Activated CD4-positive, alpha-beta T cell treated with anti-CD3 and anti-CD28 coated beads for 36 hours (primary cell): ENCODE measurements at regions of chrX and their contacts with region 1.

Region 1: DNA sequence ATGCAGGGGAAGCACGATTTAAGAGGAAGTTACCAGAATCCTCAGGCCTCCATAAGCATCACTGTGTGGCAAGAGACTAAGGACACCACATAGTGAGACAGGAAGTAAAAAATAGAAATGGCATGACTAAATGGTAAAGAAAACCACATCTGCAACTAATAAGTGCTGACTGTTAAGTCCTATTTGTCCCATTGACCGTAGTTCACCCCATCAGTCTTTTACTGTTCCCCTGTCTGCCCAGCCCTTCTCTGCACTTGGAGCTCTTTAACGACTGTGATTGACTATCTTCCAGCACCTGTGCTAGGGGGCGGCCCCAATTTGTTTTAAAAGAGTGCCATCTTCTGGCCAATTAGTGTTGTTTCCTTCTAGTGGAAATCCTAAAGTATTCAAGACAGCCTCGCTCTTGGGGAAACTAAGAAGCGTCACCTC is 94.2 kb downstream of the MAOA start:
- DNase-seq: peak; percentile 51
- ATAC-seq: peak; percentile 68
- H3K4me3 Mint-ChIP-seq: no peak overlapping the region
- H3K27ac Mint-ChIP-seq: no peak overlapping the region
- H3K4me1 Mint-ChIP-seq: no peaks in the 10 kb centered on the region
- H3K27me3 Mint-ChIP-seq: no peaks in the 10 kb centered on the region

Region 2: GRCh38 chrX:41781502-41781901 is 1968.8 kb before region 1 on chrX:
- CTCF ChIA-PET with region 1: no interaction called
- POLR2A ChIA-PET with region 1: no interaction called
- intact Hi-C with region 1: loop called in 1 of 2 experiments (anchors 10 kb)
- DNase-seq: no peak
- ATAC-seq: no peak
- H3K4me3 Mint-ChIP-seq: no peak overlapping the region
- H3K27ac Mint-ChIP-seq: no peak overlapping the region
- H3K4me1 Mint-ChIP-seq: peaks cover 15% of the 10 kb centered on the region
- H3K27me3 Mint-ChIP-seq: no peaks in the 10 kb centered on the region

Region 3: GRCh38 chrX:43349363-43349762 is 400.9 kb before region 1 on chrX:
- CTCF ChIA-PET with region 1: interaction called, 5 read pairs
- POLR2A ChIA-PET with region 1: no interaction called
- intact Hi-C with region 1: loop called (anchors 1 to 10 kb)
- DNase-seq: peak; percentile 50
- ATAC-seq: no peak
- H3K4me3 Mint-ChIP-seq: no peak overlapping the region
- H3K27ac Mint-ChIP-seq: no peak overlapping the region
- H3K4me1 Mint-ChIP-seq: peaks cover 12% of the 10 kb centered on the region
- H3K27me3 Mint-ChIP-seq: peaks cover 2% of the 10 kb centered on the region

Region 4: DNA sequence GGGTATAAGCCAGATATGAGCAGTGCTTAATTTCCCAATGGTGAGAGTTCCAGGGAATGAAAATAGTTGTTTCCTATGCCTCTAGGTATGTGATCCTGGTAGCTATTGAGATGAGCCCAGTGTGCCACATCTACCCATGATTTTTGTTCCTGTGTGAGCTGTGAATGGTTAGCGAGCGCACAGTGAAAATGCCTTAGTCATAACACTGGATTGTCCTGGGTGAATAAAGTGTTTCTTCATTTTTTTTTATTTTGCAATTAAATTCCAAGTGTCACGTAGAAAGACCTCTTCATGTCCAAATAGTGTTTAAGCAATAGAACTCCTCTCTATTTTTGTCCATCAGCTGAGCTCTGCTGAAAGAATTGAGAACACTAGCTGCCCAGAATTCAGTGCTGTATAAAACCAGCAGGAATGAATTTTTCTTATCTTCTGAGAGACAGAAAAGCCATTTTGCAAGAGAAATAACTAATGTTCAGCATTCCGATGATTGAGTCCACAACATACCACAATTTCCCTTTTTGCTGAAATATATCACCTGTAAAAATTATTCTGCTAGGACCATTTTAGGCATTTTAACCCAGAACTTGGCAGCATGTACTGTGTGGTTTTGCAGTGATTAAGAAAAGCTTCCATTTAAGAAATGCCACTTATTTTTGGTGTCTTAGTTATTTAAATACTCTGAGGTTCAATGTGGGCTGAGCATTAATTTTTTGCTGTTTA is 88.6 kb before region 1 on chrX:
- CTCF ChIA-PET with region 1: no interaction called
- POLR2A ChIA-PET with region 1: no interaction called
- intact Hi-C with region 1: no loop called
- DNase-seq: no peak
- ATAC-seq: no peak
- H3K4me3 Mint-ChIP-seq: no peak overlapping the region
- H3K27ac Mint-ChIP-seq: no peak overlapping the region
- H3K4me1 Mint-ChIP-seq: peaks cover 5% of the 10 kb centered on the region
- H3K27me3 Mint-ChIP-seq: peaks cover 6% of the 10 kb centered on the region

Region 5: GRCh38 chrX:43728002-43728401 is 22.3 kb before region 1 on chrX:
- CTCF ChIA-PET with region 1: no interaction called
- POLR2A ChIA-PET with region 1: no interaction called
- intact Hi-C with region 1: no loop called
- DNase-seq: no peak
- ATAC-seq: no peak
- H3K4me3 Mint-ChIP-seq: no peak overlapping the region
- H3K27ac Mint-ChIP-seq: no peak overlapping the region
- H3K4me1 Mint-ChIP-seq: no peaks in the 10 kb centered on the region
- H3K27me3 Mint-ChIP-seq: peaks cover 2% of the 10 kb centered on the region